HAP-1 (cell line): ENCODE measurements at regions of chr2 and their contacts with region 1.

Region 1: DNA sequence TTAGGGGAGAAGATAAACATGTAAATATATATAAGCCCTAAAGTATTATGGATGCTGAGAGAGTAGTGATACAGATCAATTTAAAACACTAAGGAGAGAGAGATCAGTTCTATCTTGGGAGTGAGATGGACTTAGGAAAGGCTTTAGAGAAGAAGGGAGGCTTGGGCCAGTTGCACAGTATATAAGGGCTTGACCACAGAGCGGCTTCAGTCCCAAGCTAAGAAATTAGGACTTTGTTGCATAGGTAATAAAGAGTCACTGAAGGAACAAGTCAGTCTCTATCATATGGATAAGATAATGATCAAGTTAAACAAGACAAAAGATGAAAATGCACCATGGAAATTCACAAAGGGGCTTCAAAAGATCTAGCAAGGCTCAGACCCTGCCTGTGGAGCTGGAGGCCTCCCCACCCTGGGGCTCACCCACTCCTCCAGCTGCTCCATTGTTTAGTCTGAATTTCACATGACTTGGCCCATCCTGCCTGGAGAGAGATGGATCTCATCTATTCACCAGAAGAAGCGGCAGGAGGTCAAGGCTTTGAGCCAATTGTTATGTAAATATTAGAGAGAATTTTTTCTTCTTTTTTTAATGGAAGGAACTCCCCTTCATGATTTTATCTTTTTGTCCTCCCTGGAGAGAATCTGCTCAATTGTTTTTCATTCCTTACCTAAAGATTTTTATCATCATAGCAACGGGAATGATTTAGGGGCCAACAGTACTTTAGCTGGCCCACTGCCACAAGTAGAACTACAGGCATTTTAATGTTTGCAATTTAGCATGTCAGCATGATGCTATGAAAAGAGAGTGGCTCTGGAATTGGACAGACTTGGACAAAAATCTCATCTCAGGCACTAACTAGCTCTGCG is 44.0 kb downstream of the GYPC start:
- DNase-seq: peak; percentile 89 to 97
- H3K4me3 ChIP-seq: no peak overlapping the region
- H3K4me1 ChIP-seq: peaks cover 26% of the 10 kb centered on the region
- H3K27me3 ChIP-seq: no peaks in the 10 kb centered on the region

Region 2: DNA sequence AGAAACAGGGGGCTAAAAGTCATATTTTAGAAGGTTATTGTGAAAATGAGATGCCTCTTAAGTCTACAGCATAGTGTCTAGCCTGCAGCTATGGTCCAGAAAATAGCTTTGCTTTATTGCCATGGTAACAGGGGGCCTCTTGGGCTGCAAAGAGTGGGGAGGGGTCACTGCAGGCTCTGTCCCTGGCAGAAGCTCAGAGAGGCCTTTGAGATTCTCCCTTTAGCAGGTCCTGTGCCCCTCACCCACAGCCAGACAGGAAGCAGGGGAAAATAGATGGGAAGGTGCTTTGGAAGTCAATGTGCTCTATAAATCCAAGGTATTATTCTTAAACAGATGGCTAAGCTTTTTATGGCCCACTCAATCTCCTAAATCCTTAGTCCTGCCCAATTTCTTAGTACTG is 1065.3 kb before region 1 on chr2:
- in situ Hi-C with region 1: no loop called
- DNase-seq: no peak
- H3K4me3 ChIP-seq: no peak overlapping the region
- H3K4me1 ChIP-seq: no peaks in the 10 kb centered on the region
- H3K27me3 ChIP-seq: no peaks in the 10 kb centered on the region

Region 3: GRCh38 chr2:126187668-126188067 is 512.3 kb before region 1 on chr2:
- in situ Hi-C with region 1: no loop called
- DNase-seq: no peak
- H3K4me3 ChIP-seq: no peak overlapping the region
- H3K4me1 ChIP-seq: no peaks in the 10 kb centered on the region
- H3K27me3 ChIP-seq: no peaks in the 10 kb centered on the region

Region 4: GRCh38 chr2:126664234-126664633 is 35.7 kb before region 1 on chr2:
- in situ Hi-C with region 1: loop called (anchors 5 kb)
- DNase-seq: no peak
- H3K4me3 ChIP-seq: no peak overlapping the region
- H3K4me1 ChIP-seq: no peaks in the 10 kb centered on the region
- H3K27me3 ChIP-seq: no peaks in the 10 kb centered on the region